Activated T-helper 1 cell treated with anti-CD3 and anti-CD28 coated beads, Interleukin-12 subunit alpha, Interleukin-12 subunit beta, Interleukin-2, Interleukin-4 antibody, amounts not matched to agents 30 ng/mL and 10 ng/mL and 1 ng/mL, durations not matched to agents 14 hours and 24 hours and 36 hours (primary cell): ENCODE measurements at regions of chr17 and their contacts with region 1.

Region 1: DNA sequence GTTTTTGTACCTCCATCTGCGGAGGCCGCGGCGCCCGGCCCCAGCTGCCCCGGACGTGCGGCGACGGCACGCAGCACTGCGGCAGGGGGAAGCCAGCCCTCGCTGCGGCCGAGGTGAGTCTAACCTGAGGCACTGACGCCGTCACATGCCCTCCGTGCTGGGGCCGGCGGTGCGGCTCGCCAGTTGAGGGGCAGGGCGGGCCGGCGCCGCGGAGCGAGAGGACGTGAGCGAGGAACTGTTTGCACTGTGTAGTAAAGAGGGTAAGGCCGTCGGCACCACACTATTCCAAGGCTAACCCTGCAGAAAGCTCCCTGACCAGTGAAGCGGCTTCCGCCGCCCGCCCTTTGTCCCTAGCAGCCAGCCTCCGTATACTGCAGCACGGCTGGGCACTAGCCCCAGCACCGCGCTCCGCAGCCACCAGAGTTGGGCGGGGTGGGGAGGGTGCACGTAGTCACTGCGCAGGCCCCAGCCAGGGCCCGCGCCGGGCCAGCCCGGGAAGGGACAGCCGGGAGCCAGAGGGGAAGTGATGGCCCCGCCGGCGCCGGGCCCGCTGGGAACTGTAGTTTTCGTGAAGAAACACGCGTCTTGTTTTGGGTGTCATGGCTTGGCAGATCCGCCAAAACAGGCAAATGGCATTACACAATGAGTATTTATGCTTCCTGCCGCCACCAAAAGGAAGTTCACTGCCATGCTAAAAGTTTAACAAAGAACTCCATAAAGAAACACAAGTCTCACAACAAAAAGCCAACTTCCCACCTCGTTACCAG is 580 bp upstream of the KANSL1 start:
- DNase-seq: peak; percentile 95
- H3K4me3 Mint-ChIP-seq: peak overlapping the region; percentile 73
- H3K27ac Mint-ChIP-seq: peak overlapping the region; percentile 91
- H3K4me1 Mint-ChIP-seq: peaks cover 68% of the 10 kb centered on the region
- H3K27me3 Mint-ChIP-seq: no peaks in the 10 kb centered on the region

Region 2: DNA sequence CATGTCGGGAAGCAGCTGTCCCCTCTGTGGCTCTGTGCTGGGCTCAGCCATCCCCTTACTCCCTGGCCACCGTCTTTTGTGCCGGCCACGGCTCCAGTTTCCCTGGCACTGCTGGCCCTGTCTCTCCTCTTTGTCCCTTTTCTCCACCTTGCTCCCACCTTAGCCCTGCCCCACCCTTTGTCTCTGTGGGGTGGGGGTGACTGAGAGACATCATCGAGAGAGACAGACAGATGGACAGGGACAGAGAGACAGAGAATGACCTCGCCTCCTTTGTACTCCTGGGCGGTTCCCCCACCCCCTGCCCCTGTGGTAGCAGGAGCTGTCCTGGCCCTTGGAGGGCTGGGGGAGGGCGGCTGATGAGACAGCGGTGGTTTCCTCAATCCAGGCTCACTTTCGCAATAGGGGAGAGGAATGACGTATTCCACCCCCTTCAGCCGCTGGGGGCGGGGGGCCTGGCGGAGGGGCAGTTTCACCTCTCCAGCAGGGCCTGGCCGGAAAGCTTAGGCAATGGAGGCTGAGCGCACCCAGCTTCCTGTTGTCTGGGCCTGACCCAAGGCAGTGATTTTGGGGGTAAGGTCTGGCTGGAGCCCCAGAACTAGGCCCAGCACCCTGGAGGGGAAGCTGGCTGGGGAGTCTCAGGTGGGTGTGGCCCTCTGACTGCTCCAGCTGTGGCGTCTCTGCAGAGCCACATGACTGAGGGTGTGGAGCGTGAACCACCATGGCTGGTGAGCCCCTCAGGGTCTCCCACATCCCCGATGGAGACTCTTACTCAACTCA is 964.9 kb before region 1 on chr17:
- intact Hi-C with region 1: loop called (anchors 5 kb)
- DNase-seq: peak; percentile 81
- H3K4me3 Mint-ChIP-seq: peak overlapping the region; percentile 99
- H3K27ac Mint-ChIP-seq: peak overlapping the region; percentile 97
- H3K4me1 Mint-ChIP-seq: peaks cover 94% of the 10 kb centered on the region
- H3K27me3 Mint-ChIP-seq: no peaks in the 10 kb centered on the region

Region 3: DNA sequence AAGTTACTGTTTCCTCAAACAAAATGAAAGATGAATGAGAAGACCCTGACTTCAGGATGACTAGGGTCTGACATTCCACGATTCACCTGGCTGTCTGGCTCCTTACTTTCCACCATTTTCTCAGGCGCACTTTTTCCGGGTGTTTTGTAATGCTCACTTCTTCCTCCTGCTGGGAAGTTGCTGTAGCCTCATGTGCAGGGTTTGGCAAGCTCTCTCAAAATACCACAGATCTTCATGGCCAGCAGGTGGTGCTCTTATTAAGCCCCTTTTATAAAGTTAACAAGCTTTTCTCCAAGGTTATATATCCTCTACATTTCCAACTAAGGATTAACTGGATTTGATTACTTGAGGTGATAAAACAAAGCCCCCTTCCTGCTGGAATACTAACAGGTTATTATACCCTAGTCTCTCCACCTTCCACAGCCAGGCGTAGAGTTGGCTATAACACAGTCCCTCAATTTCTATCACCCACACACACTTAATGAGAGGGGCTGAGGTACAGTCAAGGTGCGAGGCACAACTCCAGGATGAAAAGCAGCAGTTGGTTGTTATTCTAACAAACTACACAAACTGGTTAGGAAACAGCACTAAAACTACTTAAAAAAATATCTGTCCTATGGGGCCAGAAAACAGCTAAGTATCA is 149.4 kb before region 1 on chr17:
- intact Hi-C with region 1: loop called (anchors 1 kb)
- DNase-seq: peak; percentile 12
- H3K4me3 Mint-ChIP-seq: no peak overlapping the region
- H3K27ac Mint-ChIP-seq: peak overlapping the region; percentile 2
- H3K4me1 Mint-ChIP-seq: peaks cover 30% of the 10 kb centered on the region
- H3K27me3 Mint-ChIP-seq: no peaks in the 10 kb centered on the region

Region 4: GRCh38 chr17:46089389-46089965 is 104.3 kb before region 1 on chr17:
- intact Hi-C with region 1: loop called (anchors 2 kb)
- DNase-seq: no peak
- H3K4me3 Mint-ChIP-seq: no peak overlapping the region
- H3K27ac Mint-ChIP-seq: peak overlapping the region; percentile 82
- H3K4me1 Mint-ChIP-seq: peaks cover 39% of the 10 kb centered on the region
- H3K27me3 Mint-ChIP-seq: no peaks in the 10 kb centered on the region

Region 5: DNA sequence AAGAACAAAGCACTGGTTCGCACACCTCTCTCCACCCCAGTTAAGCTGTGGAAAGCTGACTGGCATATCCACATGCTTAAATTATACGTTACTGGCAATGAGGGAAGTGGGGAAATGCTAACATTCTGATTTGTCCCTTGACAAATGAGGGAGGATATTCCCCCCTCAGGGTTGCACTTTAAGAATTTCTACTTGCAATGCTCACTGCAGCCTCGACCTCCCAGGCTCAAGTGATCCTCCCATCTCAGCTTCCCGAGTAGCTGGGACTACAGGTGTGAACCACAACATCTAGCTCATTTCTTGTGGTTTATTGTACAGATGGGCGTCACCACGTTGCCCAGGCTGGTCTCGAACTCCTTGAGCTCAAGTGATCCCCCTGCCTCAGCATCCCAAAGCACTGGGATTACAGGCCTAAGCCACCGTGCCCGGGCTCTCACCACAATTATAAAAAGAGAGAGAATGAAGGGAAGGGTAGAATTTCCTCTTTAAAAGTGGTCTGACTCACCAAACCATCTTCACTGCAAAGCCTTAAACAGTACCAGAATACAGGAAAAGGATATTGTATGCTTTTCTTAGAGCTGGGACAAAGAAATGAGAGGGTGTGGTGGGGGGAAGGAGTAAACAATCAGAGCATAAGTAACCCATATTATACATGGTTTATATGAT is 39.5 kb before region 1 on chr17:
- intact Hi-C with region 1: loop called (anchors 1 kb)
- DNase-seq: peak; percentile 27
- H3K4me3 Mint-ChIP-seq: peak overlapping the region; percentile 76
- H3K27ac Mint-ChIP-seq: peak overlapping the region; percentile 82
- H3K4me1 Mint-ChIP-seq: peaks cover 82% of the 10 kb centered on the region
- H3K27me3 Mint-ChIP-seq: no peaks in the 10 kb centered on the region

Region 6: GRCh38 chr17:46212634-46213435 is 19.0 kb after region 1 on chr17:
- intact Hi-C with region 1: loop called (anchors 1 kb)
- DNase-seq: peak; percentile 57
- H3K4me3 Mint-ChIP-seq: no peak overlapping the region
- H3K27ac Mint-ChIP-seq: peak overlapping the region; percentile 12
- H3K4me1 Mint-ChIP-seq: peaks cover 14% of the 10 kb centered on the region
- H3K27me3 Mint-ChIP-seq: no peaks in the 10 kb centered on the region

Region 7: GRCh38 chr17:46266656-46267544 is 73.1 kb after region 1 on chr17:
- intact Hi-C with region 1: loop called (anchors 2 kb)
- DNase-seq: peak; percentile 86
- H3K4me3 Mint-ChIP-seq: peak overlapping the region; percentile 92
- H3K27ac Mint-ChIP-seq: peak overlapping the region; percentile 88
- H3K4me1 Mint-ChIP-seq: peaks cover 39% of the 10 kb centered on the region
- H3K27me3 Mint-ChIP-seq: peaks cover 50% of the 10 kb centered on the region